ENCODE measurements at regions of chr19 and their contacts with region 1.

Region 1: DNA sequence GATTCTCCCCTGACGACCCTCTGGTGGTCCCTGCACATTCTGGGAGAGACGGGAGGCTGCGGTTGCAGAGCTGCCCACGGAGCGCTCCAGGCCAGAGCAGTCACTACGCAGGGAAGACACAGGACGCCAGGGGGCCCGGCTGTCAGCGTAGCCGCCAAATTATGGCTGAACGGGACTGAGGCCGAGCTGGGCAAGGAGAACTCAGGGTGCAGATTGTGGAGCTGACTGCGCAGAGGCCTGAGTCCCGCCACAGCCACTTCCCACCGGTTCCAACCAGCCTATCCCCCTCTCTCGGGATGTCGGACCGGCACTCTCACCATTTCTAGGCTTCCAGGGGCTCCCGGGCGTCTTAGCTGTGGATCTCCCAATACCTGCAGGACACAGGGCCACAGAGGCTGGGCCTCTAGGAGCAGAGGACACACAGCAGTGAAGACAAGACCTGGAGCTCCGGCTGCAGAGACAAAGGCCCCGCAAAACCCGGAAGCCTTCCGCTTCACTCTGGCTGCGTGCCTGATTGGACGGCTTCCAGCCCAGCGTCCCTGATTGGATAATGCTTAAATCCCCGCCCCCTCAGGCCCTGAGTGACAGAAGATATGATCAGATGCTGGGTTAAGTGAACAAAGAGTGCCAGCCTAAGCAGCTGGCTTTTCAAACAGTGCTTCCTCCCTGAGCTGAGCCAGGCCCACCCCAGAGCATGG is at the start of gene ZNF737:
- DNase-seq: peak; percentile 94
- ATAC-seq: peak; percentile 96
- H3K4me3 ChIP-seq: peak within 1 kb of the TSS; percentile 76 to 80 (median 76)
- H3K27ac ChIP-seq: peak within 1 kb of the TSS; percentile 82
- H3K4me1 ChIP-seq: no peaks in the 10 kb centered on the region
- H3K27me3 ChIP-seq: no peaks in the 10 kb centered on the region
- CTCF ChIP-seq: peak; percentile 65
- EP300 ChIP-seq: no peak
- POLR2A ChIP-seq: peak; percentile 72 to 77
- RAD21 ChIP-seq: peak; percentile 51; the same call in 1 of the 2 replicates
- total RNA-seq, gene ZNF737: 5.0 and 6.2 TPM in 2 replicates

Region 2: GRCh38 chr19:19554074-19555023 is 1011.1 kb before region 1 on chr19:
- CTCF ChIA-PET with region 1: no interaction called
- POLR2A ChIA-PET with region 1: no interaction called
- in situ Hi-C with region 1: loop called (anchors 25 kb)
- intact Hi-C with region 1: no loop called
- DNase-seq: no peak
- ATAC-seq: peak; percentile 58
- H3K4me3 ChIP-seq: no peak overlapping the region
- H3K27ac ChIP-seq: no peak overlapping the region
- H3K4me1 ChIP-seq: no peaks in the 10 kb centered on the region
- H3K27me3 ChIP-seq: peaks cover 4 to 35% of the 10 kb centered on the region in 2 experiments; a peak in 4 of 5 replicates
- CTCF ChIP-seq: peak; percentile 68
- EP300 ChIP-seq: no peak
- POLR2A ChIP-seq: no peak
- RAD21 ChIP-seq: no peak

Region 3: DNA sequence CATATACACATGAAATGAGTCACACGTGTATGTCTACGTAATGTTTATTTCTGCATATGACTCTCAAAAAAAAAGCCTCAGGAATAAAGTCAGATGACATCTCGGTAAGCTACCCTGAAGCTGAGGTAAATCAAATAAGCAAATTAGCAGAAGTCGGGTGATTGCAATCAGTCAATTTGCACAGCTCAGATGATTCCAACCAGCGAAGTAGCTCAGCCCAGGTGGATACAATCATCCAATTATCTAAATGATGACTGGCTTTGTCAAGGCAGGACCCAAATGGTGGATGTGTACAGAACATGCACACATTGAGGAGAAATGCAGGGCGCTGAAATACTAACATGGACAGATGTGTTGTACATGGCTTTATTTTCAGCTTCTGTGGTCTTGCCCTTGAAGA is 249.9 kb before region 1 on chr19:
- CTCF ChIA-PET with region 1: no interaction called
- POLR2A ChIA-PET with region 1: no interaction called
- in situ Hi-C with region 1: no loop called
- intact Hi-C with region 1: no loop called
- DNase-seq: no peak
- ATAC-seq: no peak
- H3K4me3 ChIP-seq: no peak overlapping the region
- H3K27ac ChIP-seq: no peak overlapping the region
- H3K4me1 ChIP-seq: no peaks in the 10 kb centered on the region
- H3K27me3 ChIP-seq: no peaks in the 10 kb centered on the region
- CTCF ChIP-seq: no peak
- EP300 ChIP-seq: no peak
- POLR2A ChIP-seq: no peak
- RAD21 ChIP-seq: no peak

Region 4: DNA sequence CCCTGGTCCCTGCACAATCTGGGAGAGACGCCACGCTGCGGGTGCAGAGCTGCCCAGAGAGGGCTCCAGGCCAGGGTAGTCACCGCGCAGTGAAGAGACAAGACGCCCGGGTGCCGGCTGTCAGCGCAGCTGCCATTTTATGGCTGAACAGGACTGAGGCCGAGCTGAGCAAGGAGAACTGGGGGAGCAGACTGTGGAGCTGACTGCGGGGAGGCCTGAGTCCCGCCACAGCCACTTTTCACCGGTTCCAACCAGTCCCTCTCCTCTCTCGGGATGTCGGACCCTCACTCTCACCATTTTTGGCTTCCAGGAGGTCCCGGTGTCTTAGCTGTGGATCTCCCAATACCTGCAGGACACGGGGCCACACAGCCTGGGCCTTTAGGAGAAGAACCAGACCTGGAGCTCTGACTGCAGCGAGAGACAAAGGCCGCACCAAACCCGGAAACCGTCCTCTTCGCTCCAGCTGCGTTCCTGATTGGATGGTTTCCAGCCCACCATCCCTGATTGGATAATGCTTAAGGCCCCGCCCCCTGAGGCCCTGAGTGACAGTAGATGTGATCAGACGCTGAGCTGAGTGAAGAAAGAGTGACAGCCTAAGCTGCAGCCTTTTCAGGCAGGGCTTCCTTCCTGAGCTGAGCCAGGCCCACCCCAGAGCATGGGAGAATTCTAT is 95.8 kb after region 1 on chr19 and contains the start of gene ZNF626:
- CTCF ChIA-PET with region 1: no interaction called
- POLR2A ChIA-PET with region 1: interaction called, 16 read pairs
- in situ Hi-C with region 1: no loop called
- intact Hi-C with region 1: no loop called
- DNase-seq: peak; percentile 93
- ATAC-seq: peak; percentile 87
- H3K4me3 ChIP-seq: peak within 1 kb of the TSS; percentile 65 to 78 (median 76)
- H3K27ac ChIP-seq: peak within 1 kb of the TSS; percentile 76
- H3K4me1 ChIP-seq: peaks cover 62% of the 10 kb centered on the region
- H3K27me3 ChIP-seq: no peaks in the 10 kb centered on the region
- CTCF ChIP-seq: no peak
- EP300 ChIP-seq: no peak
- POLR2A ChIP-seq: peak; percentile 77 to 83
- RAD21 ChIP-seq: no peak
- total RNA-seq, gene ZNF626: 4.1 and 4.9 TPM in 2 replicates

Region 5: GRCh38 chr19:20776083-20777076 is 210.9 kb after region 1 on chr19 and contains the start of gene ZNF66:
- CTCF ChIA-PET with region 1: no interaction called
- POLR2A ChIA-PET with region 1: interaction called, 13 read pairs
- in situ Hi-C with region 1: no loop called
- intact Hi-C with region 1: no loop called
- DNase-seq: peak; percentile 96
- ATAC-seq: peak; percentile 98
- H3K4me3 ChIP-seq: peak within 1 kb of the TSS; percentile 78 to 96 (median 92)
- H3K27ac ChIP-seq: peak within 1 kb of the TSS; percentile 80
- H3K4me1 ChIP-seq: no peaks in the 10 kb centered on the region
- H3K27me3 ChIP-seq: no peaks in the 10 kb centered on the region; a peak in 1 of 5 replicates
- CTCF ChIP-seq: no peak
- EP300 ChIP-seq: no peak
- POLR2A ChIP-seq: peak; percentile 78 to 90
- RAD21 ChIP-seq: no peak
- total RNA-seq, gene ZNF66: 5.1 and 8.0 TPM in 2 replicates

Measured in HepG2 (cell line).